ENCODE measurements at regions of chr11 and their contacts with region 1.

Region 1: DNA sequence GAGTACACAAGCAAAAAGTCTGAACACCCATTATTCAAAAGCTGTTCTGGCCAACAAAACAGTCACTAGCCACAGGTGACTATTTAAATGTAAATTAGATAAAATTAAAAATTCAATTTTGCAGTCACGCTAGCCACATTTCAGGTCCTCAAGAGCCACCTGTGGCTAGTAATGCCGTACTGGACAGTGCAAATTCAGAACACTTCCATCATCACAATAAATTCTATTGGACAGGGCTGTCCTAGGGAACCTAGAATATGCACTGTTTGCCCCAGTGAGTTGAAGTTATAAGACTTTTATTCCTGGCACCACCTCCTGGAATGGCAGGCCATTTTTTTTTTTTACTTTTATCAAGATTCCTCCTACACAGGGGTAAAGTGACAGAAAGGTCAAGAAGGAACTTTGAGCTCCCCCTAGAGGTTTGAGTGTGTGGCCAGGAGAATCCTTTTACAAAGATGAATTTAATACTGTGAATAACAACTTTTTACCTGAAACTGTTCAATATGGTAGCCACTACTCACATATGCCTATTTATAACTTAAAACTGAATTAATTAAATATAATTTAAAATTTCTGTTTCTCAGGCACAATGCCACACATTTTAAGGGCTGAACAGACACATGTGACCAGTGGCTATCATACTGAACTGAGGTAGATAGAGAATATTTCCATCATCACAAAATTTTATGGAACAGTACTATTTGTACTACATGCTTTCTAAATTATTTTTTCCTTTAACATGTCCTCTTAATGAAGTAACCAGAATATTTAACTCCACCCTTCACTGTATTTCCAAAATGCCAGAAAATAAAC is 6.5 kb downstream of the MSANTD2 start:
- DNase-seq: peak; percentile 52
- H3K4me3 ChIP-seq: no peak overlapping the region
- H3K27ac ChIP-seq: no peak overlapping the region
- H3K4me1 ChIP-seq: peaks cover 9 to 16% of the 10 kb centered on the region in 2 experiments; a peak in 3 of 4 replicates
- H3K27me3 ChIP-seq: no peaks in the 10 kb centered on the region
- CTCF ChIP-seq: peak; percentile 82
- EP300 ChIP-seq: no peak
- RAD21 ChIP-seq: peak; percentile 67

Region 2: GRCh38 chr11:124778281-124778680 is 15.4 kb before region 1 on chr11:
- CTCF ChIA-PET with region 1: interaction called, 22 read pairs
- POLR2A ChIA-PET with region 1: no interaction called
- DNase-seq: peak; percentile 16
- H3K4me3 ChIP-seq: no peak overlapping the region
- H3K27ac ChIP-seq: no peak overlapping the region
- H3K4me1 ChIP-seq: no peaks in the 10 kb centered on the region
- H3K27me3 ChIP-seq: no peaks in the 10 kb centered on the region
- CTCF ChIP-seq: peak; percentile 35
- EP300 ChIP-seq: no peak
- RAD21 ChIP-seq: no peak

Region 3: DNA sequence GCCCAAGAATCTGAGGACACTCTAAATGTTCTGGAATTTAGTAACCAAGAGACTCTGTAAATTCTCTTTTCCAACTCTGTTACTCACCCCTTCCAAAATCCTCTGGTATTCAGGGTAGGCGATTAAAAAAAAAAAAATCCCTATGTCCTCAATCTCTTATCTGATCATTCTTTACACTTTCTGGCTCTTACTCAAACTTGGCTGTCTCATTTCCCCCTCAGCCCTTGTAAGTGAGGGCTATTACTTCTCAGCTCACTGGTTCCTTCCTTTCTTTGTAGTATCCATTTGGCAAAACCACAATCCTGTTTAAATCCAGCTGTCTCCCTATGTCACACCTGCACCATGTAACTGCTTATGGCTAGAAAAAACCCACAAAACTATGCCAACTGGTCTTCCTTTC is 19.2 kb after region 1 on chr11:
- CTCF ChIA-PET with region 1: interaction called, 11 read pairs
- POLR2A ChIA-PET with region 1: interaction called, 3 read pairs
- DNase-seq: no peak
- H3K4me3 ChIP-seq: no peak overlapping the region
- H3K27ac ChIP-seq: no peak overlapping the region
- H3K4me1 ChIP-seq: no peaks in the 10 kb centered on the region
- H3K27me3 ChIP-seq: no peaks in the 10 kb centered on the region; the same call in 1 of the 2 replicates
- CTCF ChIP-seq: no peak
- EP300 ChIP-seq: no peak
- RAD21 ChIP-seq: no peak

Region 4: DNA sequence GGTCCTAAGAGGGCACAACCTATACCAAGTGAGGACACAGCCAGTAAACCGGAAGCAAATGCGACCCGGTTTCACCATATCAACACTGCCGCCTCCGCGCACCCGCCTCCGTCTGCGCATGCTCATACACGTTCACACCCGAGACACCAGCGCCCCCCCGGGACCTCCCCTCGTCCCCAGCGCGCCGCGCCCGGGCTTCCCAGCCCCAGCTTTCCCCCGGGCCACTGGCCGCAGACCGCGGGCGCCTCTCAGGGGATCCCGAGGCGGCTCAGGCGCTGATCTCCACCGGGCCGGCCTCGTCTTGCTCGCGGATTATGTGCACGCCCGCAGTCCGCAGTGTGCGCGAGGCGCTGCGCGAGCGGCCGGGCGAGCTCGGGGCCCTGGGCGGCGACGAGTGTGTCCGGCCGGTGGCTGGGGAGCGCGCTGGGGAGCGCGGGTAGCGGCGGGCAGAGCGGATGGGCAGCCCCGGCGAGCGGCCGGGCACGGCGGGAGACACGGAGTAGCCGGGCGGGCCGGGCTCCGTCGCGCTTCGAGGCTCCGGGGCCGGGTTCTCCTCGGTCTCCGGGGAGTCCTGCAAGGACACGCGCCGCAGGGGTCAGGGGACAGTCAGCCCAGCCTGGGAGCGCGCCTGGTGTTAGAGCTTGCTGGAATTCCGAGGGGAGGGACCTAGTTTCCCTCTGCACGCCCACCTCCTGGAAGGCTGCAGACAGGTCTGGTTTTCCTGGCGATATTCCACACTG is 127.4 kb after region 1 on chr11:
- CTCF ChIA-PET with region 1: no interaction called
- POLR2A ChIA-PET with region 1: no interaction called
- DNase-seq: peak; percentile 94
- H3K4me3 ChIP-seq: peak overlapping the region; percentile 26 to 42; a peak in 3 of 4 replicates
- H3K27ac ChIP-seq: no peak overlapping the region
- H3K4me1 ChIP-seq: peaks cover 0 to 3% of the 10 kb centered on the region in 2 experiments; a peak in 1 of 4 replicates
- H3K27me3 ChIP-seq: no peaks in the 10 kb centered on the region
- CTCF ChIP-seq: no peak
- EP300 ChIP-seq: no peak
- RAD21 ChIP-seq: no peak